Calu3 (cell line): ENCODE measurements at regions of chr15 and their contacts with region 1.

Region 1: GRCh38 chr15:74950078-74951000 is 6.2 kb downstream of the RPP25 start:
- DNase-seq: peak; percentile 87
- H3K4me3 Mint-ChIP-seq: no peak overlapping the region
- H3K27ac Mint-ChIP-seq: no peak overlapping the region
- H3K4me1 Mint-ChIP-seq: peaks cover 17% of the 10 kb centered on the region
- H3K27me3 Mint-ChIP-seq: no peaks in the 10 kb centered on the region
- CTCF ChIP-seq: peak; percentile 96

Region 2: GRCh38 chr15:74635228-74635627 is 315.1 kb before region 1 on chr15:
- CTCF ChIA-PET with region 1: no interaction called
- intact Hi-C with region 1: loop called (anchors 2 kb)
- DNase-seq: peak; percentile 81
- H3K4me3 Mint-ChIP-seq: no peak overlapping the region
- H3K27ac Mint-ChIP-seq: no peak overlapping the region
- H3K4me1 Mint-ChIP-seq: no peaks in the 10 kb centered on the region
- H3K27me3 Mint-ChIP-seq: no peaks in the 10 kb centered on the region
- CTCF ChIP-seq: peak; percentile 94

Region 3: DNA sequence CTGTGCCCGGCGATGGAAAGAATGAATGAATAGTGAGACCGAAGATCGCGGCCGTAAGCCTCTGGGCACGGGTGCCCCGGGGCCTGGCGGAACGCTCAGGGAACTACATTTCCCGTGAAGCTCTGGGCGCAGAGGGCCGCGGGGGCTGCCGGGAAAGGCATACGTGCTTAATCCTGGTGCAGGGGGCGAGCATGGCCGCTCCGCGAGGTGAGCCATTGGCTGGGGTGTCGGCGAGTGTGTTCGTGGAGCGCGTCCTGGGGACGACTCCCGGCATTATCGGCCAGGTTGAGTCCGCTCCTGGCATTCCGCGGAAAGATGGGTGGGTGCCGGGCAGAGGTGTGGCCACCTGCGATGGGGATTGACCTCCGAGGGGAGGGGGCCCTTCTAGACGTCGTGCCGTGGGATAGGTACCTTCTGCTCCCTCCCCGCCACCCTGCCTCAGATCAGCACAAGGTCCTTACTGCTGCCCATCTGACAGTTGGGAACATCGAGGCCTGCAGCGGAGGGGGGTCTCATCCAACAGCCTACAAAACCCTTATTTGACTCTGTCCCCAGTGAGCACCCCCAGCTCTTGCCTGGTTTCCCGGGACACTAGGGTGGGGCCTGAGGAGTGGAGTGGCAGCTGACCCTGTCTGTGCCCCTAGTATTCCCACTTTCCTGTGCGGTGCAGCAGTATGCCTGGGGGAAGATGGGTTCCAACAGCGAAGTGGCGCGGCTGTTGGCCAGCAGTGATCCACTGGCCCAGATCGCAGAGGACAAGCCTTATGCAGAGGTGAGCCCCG is 60.3 kb before region 1 on chr15 and contains the start of gene MPI:
- CTCF ChIA-PET with region 1: no interaction called
- intact Hi-C with region 1: no loop called
- DNase-seq: peak; percentile 91
- H3K4me3 Mint-ChIP-seq: peak within 1 kb of the TSS; percentile 84
- H3K27ac Mint-ChIP-seq: peak within 1 kb of the TSS; percentile 57
- H3K4me1 Mint-ChIP-seq: peaks cover 48% of the 10 kb centered on the region
- H3K27me3 Mint-ChIP-seq: no peaks in the 10 kb centered on the region
- CTCF ChIP-seq: peak; percentile 29
- total RNA-seq, gene MPI: 63.3 and 76.1 TPM in 2 replicates

Region 4: GRCh38 chr15:74901612-74902082 is 48.7 kb before region 1 on chr15:
- CTCF ChIA-PET with region 1: interaction called, 12 read pairs
- intact Hi-C with region 1: no loop called
- DNase-seq: peak; percentile 81
- H3K4me3 Mint-ChIP-seq: no peak overlapping the region
- H3K27ac Mint-ChIP-seq: no peak overlapping the region
- H3K4me1 Mint-ChIP-seq: peaks cover 13% of the 10 kb centered on the region
- H3K27me3 Mint-ChIP-seq: no peaks in the 10 kb centered on the region
- CTCF ChIP-seq: peak; percentile 93

Region 5: DNA sequence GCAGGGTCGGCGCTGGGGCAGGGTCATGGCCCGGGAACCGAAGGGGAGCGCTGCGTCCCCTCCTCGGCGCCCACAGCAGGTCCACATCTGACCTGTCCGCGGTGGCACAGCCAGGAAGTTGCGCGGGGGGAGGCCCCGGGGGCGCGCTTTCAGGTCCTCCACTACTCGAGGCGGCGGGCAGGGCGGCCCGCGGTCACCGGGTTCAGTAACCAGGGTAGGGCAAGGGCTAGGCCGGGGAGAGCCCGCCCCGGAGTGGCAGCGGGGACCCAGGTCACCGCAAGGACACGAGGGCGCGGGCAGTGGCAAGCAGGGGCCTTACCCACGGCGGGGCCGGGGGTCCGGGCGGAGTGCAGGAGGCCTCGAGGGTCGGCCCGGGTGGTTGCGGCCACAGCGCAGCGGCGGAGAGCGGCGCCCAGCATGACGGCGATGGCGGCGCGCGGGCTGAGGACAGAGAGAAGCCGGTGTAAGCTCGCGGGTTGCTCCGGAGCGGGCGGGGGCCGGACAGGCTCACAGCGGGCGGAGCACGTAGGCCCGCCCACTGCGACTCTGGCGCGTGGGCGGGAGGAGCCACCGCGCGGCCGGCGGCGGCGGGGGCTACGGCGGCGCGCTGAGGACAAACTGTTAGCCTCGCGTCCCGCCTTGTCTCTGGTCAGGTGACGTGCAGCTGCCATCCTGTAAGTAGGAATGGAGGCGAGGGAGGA is 12.6 kb before region 1 on chr15 and contains the start of gene COX5A:
- CTCF ChIA-PET with region 1: interaction called, 11 read pairs
- intact Hi-C with region 1: no loop called
- DNase-seq: peak; percentile 97
- H3K4me3 Mint-ChIP-seq: peak within 1 kb of the TSS; percentile 93
- H3K27ac Mint-ChIP-seq: peak within 1 kb of the TSS; percentile 66
- H3K4me1 Mint-ChIP-seq: peaks cover 9% of the 10 kb centered on the region
- H3K27me3 Mint-ChIP-seq: peaks cover 9% of the 10 kb centered on the region
- CTCF ChIP-seq: no peak
- total RNA-seq, gene COX5A: 272 and 280 TPM in 2 replicates